Activated CD4-positive, alpha-beta memory T cell treated with anti-CD3 and anti-CD28 coated beads for 36 hours (primary cell): ENCODE measurements at regions of chr14 and their contacts with region 1.

Region 1: GRCh38 chr14:64671591-64671990 is 32.6 kb upstream of the PLEKHG3 start:
- DNase-seq: no peak
- H3K4me3 Mint-ChIP-seq: no peak overlapping the region
- H3K27ac Mint-ChIP-seq: no peak overlapping the region
- H3K4me1 Mint-ChIP-seq: peaks cover 24% of the 10 kb centered on the region
- H3K27me3 Mint-ChIP-seq: no peaks in the 10 kb centered on the region

Region 2: DNA sequence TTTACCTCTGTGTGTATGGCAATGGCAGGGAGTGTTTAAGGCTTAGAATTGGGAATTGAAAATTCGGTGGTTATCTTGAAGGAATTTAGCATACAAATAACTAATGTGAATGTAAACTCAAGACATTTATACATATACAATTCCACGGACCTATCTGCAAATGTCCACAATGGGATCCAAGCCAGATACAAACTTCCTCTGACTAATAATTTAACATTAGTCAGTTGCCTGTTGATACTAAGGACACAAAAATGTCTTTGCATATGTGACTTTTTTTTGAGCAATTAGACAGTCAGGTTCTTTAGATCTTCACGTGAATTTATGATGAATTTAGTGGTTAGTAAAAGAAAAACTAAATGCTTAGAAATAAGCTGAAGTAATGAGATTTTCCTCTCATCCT is 417.9 kb before region 1 on chr14:
- CTCF ChIA-PET with region 1: no interaction called
- POLR2A ChIA-PET with region 1: no interaction called
- intact Hi-C with region 1: no loop called
- DNase-seq: no peak
- H3K4me3 Mint-ChIP-seq: no peak overlapping the region
- H3K27ac Mint-ChIP-seq: no peak overlapping the region
- H3K4me1 Mint-ChIP-seq: no peaks in the 10 kb centered on the region
- H3K27me3 Mint-ChIP-seq: no peaks in the 10 kb centered on the region

Region 3: GRCh38 chr14:64463195-64463594 is 208.4 kb before region 1 on chr14:
- CTCF ChIA-PET with region 1: no interaction called
- POLR2A ChIA-PET with region 1: no interaction called
- intact Hi-C with region 1: no loop called
- DNase-seq: no peak
- H3K4me3 Mint-ChIP-seq: no peak overlapping the region
- H3K27ac Mint-ChIP-seq: no peak overlapping the region
- H3K4me1 Mint-ChIP-seq: peaks cover 38% of the 10 kb centered on the region
- H3K27me3 Mint-ChIP-seq: no peaks in the 10 kb centered on the region

Region 4: GRCh38 chr14:64646103-64646502 is 25.5 kb before region 1 on chr14:
- CTCF ChIA-PET with region 1: no interaction called
- POLR2A ChIA-PET with region 1: no interaction called
- intact Hi-C with region 1: no loop called
- DNase-seq: no peak
- H3K4me3 Mint-ChIP-seq: no peak overlapping the region
- H3K27ac Mint-ChIP-seq: no peak overlapping the region
- H3K4me1 Mint-ChIP-seq: no peaks in the 10 kb centered on the region
- H3K27me3 Mint-ChIP-seq: peaks cover 6% of the 10 kb centered on the region

Region 5: GRCh38 chr14:64688811-64689281 is 17.3 kb after region 1 on chr14:
- CTCF ChIA-PET with region 1: interaction called, 15 read pairs
- POLR2A ChIA-PET with region 1: no interaction called
- intact Hi-C with region 1: no loop called
- DNase-seq: no peak
- H3K4me3 Mint-ChIP-seq: no peak overlapping the region
- H3K27ac Mint-ChIP-seq: no peak overlapping the region
- H3K4me1 Mint-ChIP-seq: peaks cover 25% of the 10 kb centered on the region
- H3K27me3 Mint-ChIP-seq: no peaks in the 10 kb centered on the region

Region 6: GRCh38 chr14:64698903-64699302 is 27.3 kb after region 1 on chr14:
- CTCF ChIA-PET with region 1: interaction called, 15 read pairs
- POLR2A ChIA-PET with region 1: no interaction called
- intact Hi-C with region 1: loop called (anchors 2 kb)
- DNase-seq: peak; percentile 38
- H3K4me3 Mint-ChIP-seq: no peak overlapping the region
- H3K27ac Mint-ChIP-seq: peak overlapping the region; percentile 47
- H3K4me1 Mint-ChIP-seq: peaks cover 54% of the 10 kb centered on the region
- H3K27me3 Mint-ChIP-seq: no peaks in the 10 kb centered on the region

Region 7: DNA sequence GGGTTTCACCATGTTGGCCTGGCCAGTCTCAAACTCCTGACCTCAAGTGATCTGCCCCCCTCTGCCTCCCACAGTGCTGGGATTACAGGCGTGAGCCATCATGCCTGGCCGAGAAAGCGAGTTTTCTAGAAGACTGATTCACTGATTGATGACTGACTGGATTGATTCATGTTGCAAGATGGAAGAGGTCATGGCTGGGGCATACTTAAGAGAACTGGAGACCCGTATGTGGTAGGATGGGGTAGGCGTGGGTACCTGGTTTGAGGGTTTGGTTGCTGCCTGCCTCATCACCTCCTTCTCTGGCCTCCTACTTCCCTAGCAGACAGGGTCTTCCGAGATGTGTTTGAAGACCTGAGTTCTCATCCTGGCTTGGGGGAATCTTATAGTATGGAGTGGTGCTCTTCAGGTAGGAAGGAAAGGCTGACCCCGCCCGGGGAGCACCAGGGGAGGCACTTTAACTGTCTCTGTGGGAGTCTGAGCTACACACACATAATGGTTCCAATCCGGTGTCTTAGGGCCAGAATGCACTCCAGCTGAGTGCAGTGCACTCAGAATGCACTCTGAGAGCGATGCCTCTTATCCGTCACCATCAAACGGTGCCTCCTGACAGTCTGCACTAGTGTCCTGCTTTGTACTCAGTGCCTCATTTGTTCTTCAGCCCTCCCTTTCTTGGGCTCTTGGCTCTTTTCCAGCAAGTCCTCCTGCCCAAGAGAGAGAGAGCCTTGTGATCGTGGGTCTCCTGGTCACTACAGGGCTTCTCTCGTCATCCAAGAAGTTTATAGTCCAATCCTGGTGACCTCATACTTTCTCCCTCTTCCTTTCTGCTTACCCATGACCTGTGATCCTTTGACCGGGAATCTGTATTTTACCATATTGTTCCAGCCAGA is 52.3 kb after region 1 on chr14:
- CTCF ChIA-PET with region 1: interaction called, 10 read pairs
- POLR2A ChIA-PET with region 1: no interaction called
- intact Hi-C with region 1: loop called (anchors 1 kb)
- DNase-seq: peak; percentile 70
- H3K4me3 Mint-ChIP-seq: no peak overlapping the region
- H3K27ac Mint-ChIP-seq: peak overlapping the region; percentile 78
- H3K4me1 Mint-ChIP-seq: peaks cover 94% of the 10 kb centered on the region
- H3K27me3 Mint-ChIP-seq: no peaks in the 10 kb centered on the region

Region 8: GRCh38 chr14:64764641-64765520 is 93.3 kb after region 1 on chr14:
- CTCF ChIA-PET with region 1: interaction called, 89 read pairs
- POLR2A ChIA-PET with region 1: interaction called, 8 read pairs
- intact Hi-C with region 1: loop called (anchors 1 kb)
- DNase-seq: peak; percentile 80
- H3K4me3 Mint-ChIP-seq: peak overlapping the region; percentile 49
- H3K27ac Mint-ChIP-seq: no peak overlapping the region
- H3K4me1 Mint-ChIP-seq: peaks cover 55% of the 10 kb centered on the region
- H3K27me3 Mint-ChIP-seq: no peaks in the 10 kb centered on the region

Region 9: DNA sequence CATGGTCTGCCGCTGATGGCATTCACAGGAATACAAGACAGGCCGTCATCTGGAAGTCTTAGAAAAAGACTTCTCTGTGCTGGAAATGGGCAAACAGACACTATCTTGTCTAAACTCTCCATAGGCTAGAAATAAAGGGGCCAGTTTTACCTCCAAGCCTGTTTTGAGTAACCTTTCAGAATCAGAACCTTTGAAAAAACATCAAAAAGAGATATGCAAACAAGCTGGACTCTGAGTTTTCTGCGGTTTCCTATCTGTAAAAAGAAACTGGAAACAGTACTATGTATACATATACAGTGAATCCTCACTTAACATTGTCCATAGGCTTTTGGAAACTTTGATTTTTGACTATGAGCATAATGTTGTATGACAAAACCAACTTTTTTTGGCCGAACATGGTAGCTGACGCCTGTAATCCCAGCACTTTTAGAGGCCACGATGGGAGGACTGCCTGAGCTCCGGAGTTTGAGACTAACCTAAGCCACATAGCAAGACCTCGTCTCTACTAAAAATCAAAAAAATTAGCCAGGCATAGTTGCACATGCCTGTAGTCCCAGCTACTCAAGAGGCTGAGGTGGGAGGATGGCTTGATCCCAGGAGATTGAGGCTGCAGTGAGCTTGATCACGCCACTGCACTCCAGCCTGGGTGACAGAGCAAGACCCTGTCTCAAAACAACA is 523.6 kb after region 1 on chr14:
- CTCF ChIA-PET with region 1: no interaction called
- POLR2A ChIA-PET with region 1: no interaction called
- intact Hi-C with region 1: no loop called
- DNase-seq: no peak
- H3K4me3 Mint-ChIP-seq: no peak overlapping the region
- H3K27ac Mint-ChIP-seq: no peak overlapping the region
- H3K4me1 Mint-ChIP-seq: peaks cover 11% of the 10 kb centered on the region
- H3K27me3 Mint-ChIP-seq: no peaks in the 10 kb centered on the region